T-cell (primary cell): ENCODE measurements at regions of chrX and their contacts with region 1.

Region 1: GRCh38 chrX:136827026-136827425 is 46.3 kb upstream of the ARHGEF6 start:
- DNase-seq: no peak
- ATAC-seq: no peak
- H3K4me3 ChIP-seq: no peak overlapping the region
- H3K4me3 Mint-ChIP-seq: no peak overlapping the region
- H3K27ac ChIP-seq: no peak overlapping the region
- H3K27ac Mint-ChIP-seq: no peak overlapping the region
- H3K4me1 ChIP-seq: no peaks in the 10 kb centered on the region
- H3K4me1 Mint-ChIP-seq: no peaks in the 10 kb centered on the region
- H3K27me3 ChIP-seq: no peaks in the 10 kb centered on the region
- H3K27me3 Mint-ChIP-seq: peaks cover 0 to under 1% of the 10 kb centered on the region in 2 donors

Region 2: DNA sequence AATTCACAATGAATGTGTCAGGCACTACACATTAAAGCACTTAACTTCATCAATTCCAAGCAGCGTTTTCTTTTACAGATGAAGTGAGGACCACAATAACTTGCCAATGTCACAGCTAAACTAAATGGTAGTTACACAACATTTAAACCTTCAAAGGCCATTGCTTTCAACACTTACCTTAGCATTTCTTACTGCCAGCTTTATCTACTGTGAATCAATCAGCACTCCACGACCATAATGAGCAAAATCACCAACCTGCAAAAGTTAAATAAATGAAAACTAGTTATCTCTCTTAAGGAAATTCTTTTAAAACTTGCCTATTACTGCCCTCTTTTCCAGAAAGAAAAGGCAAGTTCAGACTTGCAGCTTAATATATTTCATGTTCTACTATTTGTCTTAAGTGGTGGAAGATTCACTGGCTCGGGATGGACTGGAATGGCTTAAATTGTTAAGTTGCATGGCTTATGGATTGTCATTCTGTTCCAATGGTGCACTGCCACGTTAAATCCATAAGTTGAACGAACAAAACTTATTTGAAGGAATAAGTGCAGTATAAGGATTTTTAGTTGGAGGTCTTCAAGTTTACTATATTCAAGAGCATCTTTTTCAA is 45.2 kb after region 1 on chrX:
- CTCF ChIA-PET with region 1: interaction called in 1 of 2 experiments, 11 read pairs
- POLR2A ChIA-PET with region 1: no interaction called
- DNase-seq: no peak
- ATAC-seq: no peak
- H3K4me3 ChIP-seq: no peak overlapping the region
- H3K4me3 Mint-ChIP-seq: no peak overlapping the region
- H3K27ac ChIP-seq: no peak overlapping the region
- H3K27ac Mint-ChIP-seq: peak overlapping the region in 1 of 2 donors; percentile 39
- H3K4me1 ChIP-seq: peaks cover 0 to 6% of the 10 kb centered on the region in 2 experiments
- H3K4me1 Mint-ChIP-seq: peaks cover 33 to 62% (median 48%) of the 10 kb centered on the region in 3 donors
- H3K27me3 ChIP-seq: no peaks in the 10 kb centered on the region
- H3K27me3 Mint-ChIP-seq: no peaks in the 10 kb centered on the region